ENCODE measurements at regions of chr7 and their contacts with region 1.

Region 1: GRCh38 chr7:90816511-90817142 is 220.5 kb downstream of the CDK14 start:
- DNase-seq: peak; percentile 85
- ATAC-seq: peak; percentile 99
- H3K4me3 ChIP-seq: no peak overlapping the region
- H3K27ac ChIP-seq: peak overlapping the region; percentile 52
- H3K4me1 ChIP-seq: 0 out of 2 replicates have a peak, but pooled peaks cover 4% of the 10 kb centered on the region
- H3K27me3 ChIP-seq: no peaks in the 10 kb centered on the region
- CTCF ChIP-seq: no peak
- EP300 ChIP-seq: peak in 1 of 2 experiments; percentile 93; a peak in 3 of 4 replicates
- POLR2A ChIP-seq: no peak
- RAD21 ChIP-seq: no peak

Region 2: GRCh38 chr7:90726623-90727022 is 90.0 kb before region 1 on chr7:
- CTCF ChIA-PET with region 1: no interaction called
- POLR2A ChIA-PET with region 1: no interaction called
- RAD21 ChIA-PET with region 1: no interaction called
- SMC1A ChIA-PET with region 1: interaction called, 4 read pairs
- in situ Hi-C with region 1: no loop called
- intact Hi-C with region 1: loop called (anchors 5 kb)
- DNase-seq: no peak
- ATAC-seq: peak; percentile 38
- H3K4me3 ChIP-seq: peak overlapping the region; percentile 20; the same call in 1 of the 2 replicates
- H3K27ac ChIP-seq: peak overlapping the region; percentile 47; the same call in 1 of the 2 replicates
- H3K4me1 ChIP-seq: peaks cover 10% of the 10 kb centered on the region
- H3K27me3 ChIP-seq: no peaks in the 10 kb centered on the region
- CTCF ChIP-seq: no peak
- EP300 ChIP-seq: no peak
- POLR2A ChIP-seq: no peak
- RAD21 ChIP-seq: no peak

Region 3: GRCh38 chr7:90843472-90843871 is 26.8 kb after region 1 on chr7:
- CTCF ChIA-PET with region 1: interaction called, 3 read pairs
- POLR2A ChIA-PET with region 1: no interaction called
- RAD21 ChIA-PET with region 1: no interaction called
- SMC1A ChIA-PET with region 1: interaction called, 18 read pairs
- in situ Hi-C with region 1: no loop called
- intact Hi-C with region 1: no loop called
- DNase-seq: no peak
- ATAC-seq: no peak
- H3K4me3 ChIP-seq: no peak overlapping the region
- H3K27ac ChIP-seq: no peak overlapping the region
- H3K4me1 ChIP-seq: no peaks in the 10 kb centered on the region
- H3K27me3 ChIP-seq: no peaks in the 10 kb centered on the region
- CTCF ChIP-seq: no peak
- EP300 ChIP-seq: no peak
- POLR2A ChIP-seq: no peak
- RAD21 ChIP-seq: no peak